Activated T-helper 1 cell treated with anti-CD3 and anti-CD28 coated beads, Interleukin-12 subunit alpha, Interleukin-12 subunit beta, Interleukin-2, Interleukin-4 antibody, amounts not matched to agents 30 ng/mL and 10 ng/mL and 1 ng/mL, durations not matched to agents 14 hours and 24 hours and 36 hours (primary cell): ENCODE measurements at regions of chr6 and their contacts with region 1.

Region 1: GRCh38 chr6:144718431-144718830 is 433.3 kb downstream of the UTRN start:
- DNase-seq: no peak
- H3K4me3 Mint-ChIP-seq: no peak overlapping the region
- H3K27ac Mint-ChIP-seq: no peak overlapping the region
- H3K4me1 Mint-ChIP-seq: peaks cover 27% of the 10 kb centered on the region
- H3K27me3 Mint-ChIP-seq: no peaks in the 10 kb centered on the region

Region 2: DNA sequence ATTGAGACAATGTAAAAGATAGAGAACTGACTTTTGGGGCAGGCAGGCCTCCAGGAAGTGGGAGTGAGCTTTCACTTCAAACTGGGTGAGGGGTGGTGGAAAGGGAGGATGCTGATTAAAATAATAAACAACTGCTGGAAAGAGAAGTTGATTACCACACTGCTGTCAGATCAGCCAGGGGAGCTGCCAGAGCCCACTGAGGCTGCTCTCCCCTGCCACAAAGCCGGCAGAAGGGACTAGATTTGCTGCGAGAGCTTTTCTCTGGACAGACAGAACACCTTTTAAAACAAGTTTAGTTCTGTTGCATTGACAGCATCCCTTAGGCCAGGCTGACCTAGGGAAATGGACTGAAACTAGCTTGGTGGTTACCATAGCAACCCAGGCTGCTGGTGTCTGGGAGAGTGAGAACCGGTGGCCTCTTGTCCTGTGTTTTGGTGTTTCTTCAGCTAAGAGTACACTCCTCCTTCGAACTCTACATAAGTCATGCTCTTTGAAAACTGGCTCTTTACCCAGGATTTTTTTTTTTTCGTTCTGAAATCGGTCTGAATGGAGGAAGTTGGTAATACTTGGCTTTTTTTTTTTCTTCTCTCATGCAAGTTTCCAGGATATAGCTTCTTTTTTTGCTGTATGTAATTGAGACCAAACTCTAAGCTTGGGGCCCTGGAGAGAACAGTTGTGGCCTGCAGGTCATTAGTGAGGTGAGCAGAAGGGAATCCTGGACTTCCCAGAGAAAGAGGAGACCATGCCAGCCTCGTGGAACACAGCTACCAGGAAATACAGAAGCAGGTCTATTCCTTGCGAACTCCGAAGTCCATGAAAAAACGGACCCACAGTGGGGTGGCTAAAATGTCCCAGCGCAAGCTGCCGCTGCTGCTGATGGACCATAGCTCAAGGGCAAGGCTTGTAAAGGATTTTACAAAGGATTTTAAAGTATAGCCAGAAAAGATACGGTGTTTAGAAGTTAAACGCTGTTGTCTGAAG is 58.9 kb before region 1 on chr6:
- intact Hi-C with region 1: loop called (anchors 5 kb)
- DNase-seq: peak; percentile 3
- H3K4me3 Mint-ChIP-seq: peak overlapping the region; percentile 15
- H3K27ac Mint-ChIP-seq: peak overlapping the region; percentile 69
- H3K4me1 Mint-ChIP-seq: peaks cover 36% of the 10 kb centered on the region
- H3K27me3 Mint-ChIP-seq: no peaks in the 10 kb centered on the region

Region 3: DNA sequence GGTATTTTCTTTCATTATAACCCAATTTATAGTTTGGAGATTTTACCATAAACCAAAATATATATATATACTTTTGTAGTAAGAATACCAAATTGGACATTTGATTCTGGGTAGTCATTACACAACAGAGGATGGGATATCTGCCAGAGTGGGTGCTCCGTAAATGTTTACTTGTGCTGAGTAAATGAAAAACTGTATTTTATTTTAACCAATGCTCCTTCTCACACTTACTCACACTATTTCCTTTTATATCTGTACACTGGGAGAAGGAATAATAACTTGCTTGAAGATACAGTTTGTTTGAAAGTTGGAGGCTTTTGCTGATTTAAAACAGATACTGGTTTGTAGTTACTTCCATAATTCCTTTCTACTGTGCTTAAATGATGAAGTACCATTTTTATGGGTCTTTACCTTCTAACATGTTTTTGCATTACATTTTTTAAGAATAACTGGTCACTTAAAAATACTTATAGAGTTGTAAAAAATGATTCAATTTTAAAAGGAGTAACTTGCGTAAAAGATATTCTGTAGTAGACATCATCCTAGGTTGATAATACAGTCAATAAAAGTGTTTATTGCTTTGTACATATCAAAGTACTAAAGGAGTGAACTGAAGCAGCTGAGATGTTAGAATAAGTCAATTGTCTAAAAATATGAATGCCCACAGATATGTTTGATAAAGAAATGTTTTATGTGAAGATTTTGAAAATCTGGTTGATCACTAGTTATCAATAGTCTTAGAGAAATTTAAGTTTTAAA is 21.6 kb before region 1 on chr6:
- intact Hi-C with region 1: loop called (anchors 2 kb)
- DNase-seq: no peak
- H3K4me3 Mint-ChIP-seq: no peak overlapping the region
- H3K27ac Mint-ChIP-seq: no peak overlapping the region
- H3K4me1 Mint-ChIP-seq: peaks cover 9% of the 10 kb centered on the region
- H3K27me3 Mint-ChIP-seq: no peaks in the 10 kb centered on the region

Region 4: GRCh38 chr6:144736763-144737162 is 18.3 kb after region 1 on chr6:
- intact Hi-C with region 1: no loop called
- DNase-seq: no peak
- H3K4me3 Mint-ChIP-seq: no peak overlapping the region
- H3K27ac Mint-ChIP-seq: no peak overlapping the region
- H3K4me1 Mint-ChIP-seq: no peaks in the 10 kb centered on the region
- H3K27me3 Mint-ChIP-seq: no peaks in the 10 kb centered on the region

Region 5: GRCh38 chr6:144879436-144879835 is 161.0 kb after region 1 on chr6:
- intact Hi-C with region 1: no loop called
- DNase-seq: no peak
- H3K4me3 Mint-ChIP-seq: no peak overlapping the region
- H3K27ac Mint-ChIP-seq: no peak overlapping the region
- H3K4me1 Mint-ChIP-seq: no peaks in the 10 kb centered on the region
- H3K27me3 Mint-ChIP-seq: peaks cover 7% of the 10 kb centered on the region

Region 6: DNA sequence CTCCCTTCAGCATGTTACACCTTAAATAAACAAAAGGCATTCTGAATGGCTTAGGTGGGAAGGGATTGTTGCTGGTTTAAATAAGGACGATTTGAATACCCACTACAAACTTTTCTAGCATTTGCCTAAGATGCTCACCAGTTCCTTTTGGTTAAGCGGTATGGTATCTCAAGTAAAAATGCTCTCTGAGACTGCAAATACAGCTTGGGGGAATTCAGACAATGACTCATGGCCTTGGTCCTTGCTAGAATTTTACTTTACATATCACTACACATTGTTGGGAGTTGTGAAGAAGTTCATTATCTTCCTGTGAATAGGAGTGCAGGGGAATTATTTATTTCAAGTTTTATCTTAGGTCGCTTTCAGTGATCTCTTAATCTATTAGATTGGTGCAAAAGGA is 237.4 kb after region 1 on chr6:
- intact Hi-C with region 1: no loop called
- DNase-seq: no peak
- H3K4me3 Mint-ChIP-seq: no peak overlapping the region
- H3K27ac Mint-ChIP-seq: no peak overlapping the region
- H3K4me1 Mint-ChIP-seq: no peaks in the 10 kb centered on the region
- H3K27me3 Mint-ChIP-seq: peaks cover 6% of the 10 kb centered on the region